ENCODE measurements at regions of chr5 and their contacts with region 1.

Region 1: GRCh38 chr5:90474235-90475109 is at the starts of genes MBLAC2 and POLR3G:
- DNase-seq: peak; percentile 92 to 95 (median 94)
- ATAC-seq: peak; percentile 98 to 99 (median 98)
- H3K4me3 ChIP-seq: peak within 1 kb of the TSS; percentile 51 to 91 (median 82)
- H3K27ac ChIP-seq: peak within 1 kb of the TSS; percentile 21 to 90 (median 82)
- H3K4me1 ChIP-seq: peaks cover 0 to 21% (median 13%) of the 10 kb centered on the region in 12 donors
- H3K27me3 ChIP-seq: no peaks in the 10 kb centered on the region
- CTCF ChIP-seq: peak in 11 of 12 donors; percentile 13 to 56 (median 44)
- POLR2A ChIP-seq: peak in 1 of 2 donors; percentile 82
- total RNA-seq, gene MBLAC2: 2.4 to 5.3 (median 3.7) TPM
- total RNA-seq, gene POLR3G: 0.30 to 1.6 (median 0.67) TPM

Region 2: GRCh38 chr5:90409318-90410177 is 64.9 kb before region 1 on chr5 and contains the start of gene CETN3:
- intact Hi-C with region 1: loop called in 4 of 10 experiments (anchors 5 to 10 kb)
- DNase-seq: peak; percentile 94 to 96 (median 95)
- ATAC-seq: peak; percentile 98
- H3K4me3 ChIP-seq: peak within 1 kb of the TSS; percentile 58 to 96 (median 80)
- H3K27ac ChIP-seq: peak within 1 kb of the TSS; percentile 91 to 99 (median 97)
- H3K4me1 ChIP-seq: peaks cover 0 to 23% (median 13%) of the 10 kb centered on the region in 12 donors
- H3K27me3 ChIP-seq: no peaks in the 10 kb centered on the region
- CTCF ChIP-seq: peak in 1 of 12 donors; percentile 17
- POLR2A ChIP-seq: peak in 1 of 2 donors; percentile 91
- total RNA-seq, gene CETN3: 9.3 to 22.9 (median 18.9) TPM

Region 3: GRCh38 chr5:90606539-90606938 is 132.1 kb after region 1 on chr5:
- intact Hi-C with region 1: no loop called
- DNase-seq: no peak
- ATAC-seq: no peak
- H3K4me3 ChIP-seq: no peak overlapping the region
- H3K27ac ChIP-seq: no peak overlapping the region
- H3K4me1 ChIP-seq: no peaks in the 10 kb centered on the region
- H3K27me3 ChIP-seq: peaks cover 0 to 9% (median 0%) of the 10 kb centered on the region in 9 donors
- CTCF ChIP-seq: peak in 1 of 12 donors; percentile 14
- POLR2A ChIP-seq: no peak

Measured in heart left ventricle (tissue), 16 donors.